Naive thymus-derived CD8-positive, alpha-beta T cell (primary cell): ENCODE measurements at regions of chr22 and their contacts with region 1.

Region 1: GRCh38 chr22:38733329-38733723 is 22.5 kb downstream of the SUN2 start:
- DNase-seq: peak; percentile 46 to 84 (median 58)
- ATAC-seq: peak; percentile 65 to 73
- H3K4me3 Mint-ChIP-seq: peak overlapping the region in 3 of 10 donors; percentile 50 to 68 (median 67)
- H3K27ac Mint-ChIP-seq: peak overlapping the region; percentile 79 to 97 (median 90)
- H3K4me1 Mint-ChIP-seq: peaks cover 30 to 70% (median 59%) of the 10 kb centered on the region in 4 donors
- H3K27me3 Mint-ChIP-seq: no peaks in the 10 kb centered on the region

Region 2: GRCh38 chr22:38705235-38706100 is 27.9 kb before region 1 on chr22 and contains the start of gene GTPBP1:
- POLR2A ChIA-PET with region 1: interaction called, 60 read pairs
- DNase-seq: peak; percentile 87 to 99 (median 98)
- ATAC-seq: peak; percentile 78 to 79
- H3K4me3 Mint-ChIP-seq: peak within 1 kb of the TSS; percentile 85 to 95 (median 90)
- H3K27ac Mint-ChIP-seq: peak within 1 kb of the TSS; percentile 83 to 99 (median 98)
- H3K4me1 Mint-ChIP-seq: peaks cover 26 to 66% (median 60%) of the 10 kb centered on the region in 4 donors
- H3K27me3 Mint-ChIP-seq: peaks cover 0 to 3% (median 0%) of the 10 kb centered on the region in 5 donors
- polyA plus RNA-seq, gene GTPBP1: 17.2 to 29.3 (median 22.6) TPM

Region 3: DNA sequence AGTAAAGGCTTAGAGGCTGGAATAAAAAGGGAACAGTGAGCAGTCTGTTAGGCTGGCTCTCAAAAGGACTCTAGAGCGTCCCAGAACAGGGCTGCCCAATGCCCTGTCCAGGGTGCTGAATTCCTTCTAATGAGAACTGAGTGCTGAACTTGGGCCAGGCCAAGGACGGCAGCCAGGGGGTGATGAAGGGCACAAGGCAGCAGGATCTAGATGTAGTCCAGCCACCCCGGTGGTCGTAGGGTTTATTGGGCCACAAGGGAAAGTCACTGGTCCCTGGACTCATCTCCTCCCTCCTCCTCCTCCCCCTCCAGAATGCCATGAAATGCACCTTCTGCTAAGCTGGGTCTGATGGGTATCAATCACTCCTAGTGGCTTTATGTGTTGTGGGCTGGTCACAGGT is 91.3 kb after region 1 on chr22:
- POLR2A ChIA-PET with region 1: no interaction called
- DNase-seq: peak in 8 of 10 donors; percentile 21 to 67 (median 32)
- ATAC-seq: peak; percentile 65 to 68
- H3K4me3 Mint-ChIP-seq: no peak overlapping the region
- H3K27ac Mint-ChIP-seq: no peak overlapping the region
- H3K4me1 Mint-ChIP-seq: peaks cover 0 to 1% (median 0%) of the 10 kb centered on the region in 4 donors
- H3K27me3 Mint-ChIP-seq: no peaks in the 10 kb centered on the region

Region 4: GRCh38 chr22:38843201-38843715 is 109.9 kb after region 1 on chr22:
- POLR2A ChIA-PET with region 1: interaction called, 57 read pairs
- DNase-seq: peak; percentile 39 to 79 (median 53)
- ATAC-seq: peak; percentile 85 to 88
- H3K4me3 Mint-ChIP-seq: peak overlapping the region in 2 of 10 donors; percentile 22 to 85
- H3K27ac Mint-ChIP-seq: no peak overlapping the region
- H3K4me1 Mint-ChIP-seq: peaks cover 19 to 32% (median 28%) of the 10 kb centered on the region in 4 donors
- H3K27me3 Mint-ChIP-seq: peaks cover 0 to 24% (median 6%) of the 10 kb centered on the region in 5 donors

Region 5: DNA sequence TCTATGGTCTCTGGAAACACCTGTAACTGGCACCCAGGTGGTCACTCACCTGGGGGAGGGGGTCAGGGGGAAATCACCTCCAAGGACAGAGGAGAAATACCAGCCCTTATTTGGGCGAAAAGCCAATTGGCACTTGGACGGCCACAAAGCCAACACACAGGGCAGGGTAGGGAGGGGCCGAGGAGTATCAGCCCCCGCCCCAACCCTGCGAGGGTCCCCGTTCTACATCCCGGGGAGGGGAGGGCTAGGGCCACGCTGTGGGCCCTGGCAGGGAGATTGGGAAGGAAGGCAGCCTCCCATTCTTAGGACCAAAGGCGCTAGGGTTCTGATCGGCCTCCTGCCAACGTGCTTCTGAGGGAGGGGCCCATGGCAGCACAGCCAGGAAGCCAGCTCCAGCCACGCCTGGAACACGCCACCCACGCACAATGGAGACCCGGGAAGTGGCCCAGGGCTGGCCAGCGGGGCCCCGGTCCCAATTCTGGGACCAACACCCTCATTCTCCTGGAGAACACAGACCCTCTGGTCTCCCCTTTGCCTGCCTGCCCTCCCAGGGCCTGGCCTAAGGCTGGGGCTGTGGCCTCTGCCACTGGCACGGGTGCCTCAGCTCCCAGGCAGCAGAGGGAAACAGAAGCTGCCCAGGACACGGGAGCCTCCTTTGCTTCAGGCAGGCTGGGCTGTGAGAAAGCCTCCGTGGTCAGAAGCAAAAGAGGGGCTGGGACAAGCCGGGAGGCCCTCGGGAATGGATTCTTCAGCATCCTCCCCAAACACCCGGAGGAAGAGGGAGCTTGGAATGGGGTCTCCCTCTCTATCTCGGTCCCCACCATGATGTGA is 131.2 kb after region 1 on chr22:
- POLR2A ChIA-PET with region 1: no interaction called
- DNase-seq: peak in 1 of 10 donors; percentile 57
- ATAC-seq: no peak
- H3K4me3 Mint-ChIP-seq: no peak overlapping the region
- H3K27ac Mint-ChIP-seq: peak overlapping the region in 4 of 10 donors; percentile 4 to 86 (median 54)
- H3K4me1 Mint-ChIP-seq: peaks cover 11 to 24% (median 21%) of the 10 kb centered on the region in 4 donors
- H3K27me3 Mint-ChIP-seq: no peaks in the 10 kb centered on the region